Natural killer cell (primary cell): ENCODE measurements at regions of chr10 and their contacts with region 1.

Region 1: DNA sequence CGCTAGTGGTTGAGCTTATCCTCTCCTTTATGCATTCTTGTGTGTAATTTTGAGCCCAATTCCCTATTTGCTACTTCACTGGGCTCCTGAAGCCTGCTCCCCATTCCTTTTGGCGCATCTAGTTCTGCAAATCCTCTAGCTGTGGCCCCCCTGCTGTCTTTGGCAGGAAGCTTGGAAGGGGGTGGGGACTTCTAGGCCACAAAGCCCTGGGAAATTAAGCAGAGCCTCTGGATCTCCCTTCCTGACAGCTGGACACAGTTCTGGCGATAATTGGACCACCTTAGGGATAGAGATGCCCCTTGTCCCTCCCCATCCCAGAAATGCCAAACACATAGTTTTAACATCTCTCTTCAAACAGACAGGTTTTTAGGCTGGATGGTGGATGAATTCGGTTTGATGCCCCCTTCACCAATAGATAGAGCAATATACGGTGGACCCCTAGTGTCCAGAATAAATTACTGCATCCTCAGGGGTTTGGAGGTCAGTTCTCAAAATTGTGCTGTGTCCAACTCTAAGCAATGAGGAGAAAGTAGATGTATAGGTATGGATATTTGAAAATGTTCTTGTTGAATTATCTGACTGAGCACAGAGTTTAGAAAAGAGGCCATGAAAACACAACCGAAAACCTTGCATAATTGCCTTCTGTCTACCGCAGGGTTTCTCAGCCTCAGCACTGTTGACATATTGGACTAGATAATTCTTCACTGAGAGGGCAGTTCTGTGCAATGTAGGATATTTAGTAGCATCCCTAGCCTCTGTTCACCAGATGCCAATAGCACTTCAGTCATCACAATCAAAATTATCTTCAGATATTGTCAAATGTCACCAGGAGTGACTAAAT is 75.5 kb downstream of the PAPSS2 start:
- DNase-seq: peak in 1 of 2 donors; percentile 25
- ATAC-seq: peak in 2 of 3 donors; percentile 55 to 71
- H3K4me3 ChIP-seq: no peak overlapping the region
- H3K4me3 Mint-ChIP-seq: no peak overlapping the region
- H3K27ac ChIP-seq: no peak overlapping the region
- H3K27ac Mint-ChIP-seq: no peak overlapping the region
- H3K4me1 ChIP-seq: no peaks in the 10 kb centered on the region
- H3K4me1 Mint-ChIP-seq: no peaks in the 10 kb centered on the region
- H3K27me3 ChIP-seq: no peaks in the 10 kb centered on the region
- H3K27me3 Mint-ChIP-seq: peaks cover 0 to 7% of the 10 kb centered on the region in 2 donors
- CTCF ChIP-seq: peak; percentile 67

Region 2: DNA sequence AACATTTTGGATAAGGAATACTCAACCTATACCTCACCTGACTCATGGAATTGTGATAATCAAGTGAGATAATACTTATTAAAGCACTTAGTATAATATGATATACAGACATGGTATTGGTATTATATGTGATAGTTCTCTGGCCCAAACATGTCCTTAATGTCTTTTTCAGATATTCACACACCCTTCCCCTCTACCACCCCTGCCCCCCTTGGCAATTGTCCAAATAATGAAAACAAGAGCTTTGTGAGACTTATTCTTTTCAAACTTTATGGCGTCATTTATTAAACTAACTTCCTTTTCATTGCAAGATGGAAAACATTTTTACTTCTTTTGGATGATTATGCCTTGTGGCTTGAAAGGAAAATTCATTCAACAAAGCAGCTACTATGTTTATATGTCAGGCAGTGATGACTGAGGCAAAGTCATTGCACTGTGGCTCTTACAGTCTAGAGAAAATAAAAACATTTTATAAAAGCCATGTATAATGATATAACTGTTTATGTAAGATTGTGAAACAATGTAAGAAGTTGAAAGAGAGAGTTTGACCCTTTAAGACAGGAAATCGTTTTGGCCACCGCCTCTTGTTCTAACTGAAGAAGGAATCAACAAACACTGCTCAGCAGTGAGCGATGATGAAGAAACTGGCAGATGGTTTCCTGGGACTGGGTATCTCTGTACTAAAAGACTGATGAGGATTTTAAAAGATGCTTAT is 203.1 kb before region 1 on chr10:
- intact Hi-C with region 1: loop called (anchors 5 kb)
- DNase-seq: no peak
- ATAC-seq: no peak
- H3K4me3 ChIP-seq: no peak overlapping the region
- H3K4me3 Mint-ChIP-seq: no peak overlapping the region
- H3K27ac ChIP-seq: no peak overlapping the region
- H3K27ac Mint-ChIP-seq: no peak overlapping the region
- H3K4me1 ChIP-seq: no peaks in the 10 kb centered on the region
- H3K4me1 Mint-ChIP-seq: peaks cover 9 to 23% of the 10 kb centered on the region in 2 donors
- H3K27me3 ChIP-seq: no peaks in the 10 kb centered on the region
- H3K27me3 Mint-ChIP-seq: no peaks in the 10 kb centered on the region
- CTCF ChIP-seq: no peak

Region 3: DNA sequence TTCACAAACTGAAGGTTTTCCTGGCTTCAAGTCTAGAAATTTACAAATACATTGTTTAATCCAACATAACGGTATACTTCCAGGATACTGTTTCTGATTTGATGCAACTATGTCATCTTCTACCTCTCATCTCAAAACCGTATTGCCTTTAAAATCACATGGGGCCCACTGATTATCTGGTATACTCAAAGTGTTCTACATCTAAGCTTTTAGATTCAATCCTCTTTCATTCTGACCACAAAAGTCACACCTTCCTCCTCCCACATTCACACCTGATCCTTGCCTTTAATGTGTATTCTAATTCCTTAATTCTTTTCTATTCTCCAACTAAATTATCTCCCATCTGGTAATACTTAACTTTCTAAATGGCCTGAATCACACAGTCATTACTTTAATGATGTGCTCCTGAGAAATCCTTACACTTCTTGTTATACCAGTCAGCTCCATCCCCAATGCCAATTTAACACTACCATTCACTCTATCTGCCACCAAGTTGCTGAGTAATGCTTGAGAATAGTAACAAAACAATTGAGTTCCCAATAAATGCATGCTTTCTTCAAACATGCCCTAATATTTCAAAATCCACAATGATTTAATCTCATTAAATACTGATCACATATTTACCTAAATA is 69.8 kb after region 1 on chr10:
- intact Hi-C with region 1: no loop called
- DNase-seq: peak in 1 of 2 donors; percentile 10
- ATAC-seq: no peak
- H3K4me3 ChIP-seq: no peak overlapping the region
- H3K4me3 Mint-ChIP-seq: no peak overlapping the region
- H3K27ac ChIP-seq: no peak overlapping the region
- H3K27ac Mint-ChIP-seq: peak overlapping the region; percentile 1 to 44
- H3K4me1 ChIP-seq: no peaks in the 10 kb centered on the region
- H3K4me1 Mint-ChIP-seq: peaks cover 36 to 48% of the 10 kb centered on the region in 2 donors
- H3K27me3 ChIP-seq: no peaks in the 10 kb centered on the region
- H3K27me3 Mint-ChIP-seq: no peaks in the 10 kb centered on the region
- CTCF ChIP-seq: no peak